GM13977 (cell line): ENCODE measurements at regions of chr2 and their contacts with region 1.

Region 1: DNA sequence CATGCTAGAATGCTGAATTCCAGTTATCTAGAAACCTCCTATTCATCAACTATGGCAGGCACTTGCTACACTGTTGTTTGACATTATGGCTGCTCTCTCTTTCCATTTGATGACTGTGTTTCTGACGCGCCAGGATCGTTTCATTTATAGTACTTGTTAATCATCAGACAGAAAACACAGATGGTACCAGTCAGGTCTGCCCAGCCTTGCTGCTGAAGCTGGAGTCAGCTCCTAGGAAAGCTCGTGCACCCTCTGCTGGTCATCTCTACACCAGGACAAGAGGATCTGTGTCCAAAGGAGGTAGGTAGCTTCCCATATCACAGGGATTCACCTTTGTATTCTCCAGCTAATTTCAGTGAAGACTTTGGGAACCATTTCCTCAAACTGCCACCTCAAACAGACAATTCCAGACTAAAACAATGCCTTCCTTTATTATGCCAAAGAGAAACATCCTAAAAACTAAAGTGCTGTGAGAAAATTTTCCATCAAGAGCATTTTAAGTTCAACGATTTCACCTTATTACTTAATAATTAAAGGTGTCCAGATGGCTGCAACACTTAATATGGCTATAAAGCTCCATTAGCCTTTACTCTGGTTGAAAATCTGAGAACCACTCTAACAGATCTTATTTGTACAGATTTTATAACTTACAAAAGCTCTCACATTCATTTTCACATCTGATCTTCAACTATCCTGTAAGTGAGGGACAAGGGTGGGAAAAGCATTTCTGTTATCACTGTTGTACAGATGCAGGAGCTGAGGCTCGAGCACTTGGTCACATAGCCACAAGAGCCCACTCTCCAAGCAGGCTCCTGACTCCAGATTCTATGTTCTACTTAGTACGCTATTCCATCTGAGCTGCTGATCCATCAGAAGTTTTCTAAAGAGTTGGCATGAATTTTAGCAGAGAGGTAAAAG is 17.5 kb downstream of the METTL8 start:
- DNase-seq: peak; percentile 64
- CTCF ChIP-seq: peak; percentile 79

Region 2: DNA sequence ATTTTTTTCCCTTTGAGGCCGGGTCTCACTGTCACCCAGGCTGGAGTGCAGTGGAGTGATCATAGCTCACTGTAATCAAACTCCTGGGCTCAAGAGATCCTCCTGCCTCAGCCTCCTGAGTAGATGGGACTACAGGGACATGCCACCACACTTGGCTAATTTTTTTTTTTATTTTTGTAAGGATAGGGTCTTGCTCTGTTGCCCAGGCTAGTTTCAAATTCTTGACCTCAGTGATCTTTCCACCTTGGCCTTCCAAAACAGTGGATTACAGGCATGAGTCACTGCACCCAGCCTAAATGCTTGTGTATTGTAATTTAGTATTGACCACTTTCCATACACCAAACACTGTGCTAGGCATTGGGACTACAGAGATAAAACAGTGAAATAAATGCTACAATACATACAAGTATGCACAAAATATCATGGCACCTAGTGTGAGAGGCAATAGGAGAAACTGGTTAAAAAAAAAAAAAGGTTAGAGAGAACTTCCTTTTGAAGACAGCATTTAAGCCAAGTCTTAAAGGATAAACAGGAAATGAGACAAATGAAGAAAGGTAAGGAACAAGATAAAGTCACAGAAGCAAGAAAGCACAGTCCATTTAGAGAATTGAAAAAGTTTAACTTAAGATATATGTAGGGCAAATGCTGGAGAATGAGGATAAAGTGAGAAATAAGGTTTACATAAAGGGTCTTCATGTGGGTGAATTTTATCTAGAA is 373.9 kb before region 1 on chr2:
- in situ Hi-C with region 1: no loop called
- DNase-seq: no peak
- CTCF ChIP-seq: no peak

Region 3: DNA sequence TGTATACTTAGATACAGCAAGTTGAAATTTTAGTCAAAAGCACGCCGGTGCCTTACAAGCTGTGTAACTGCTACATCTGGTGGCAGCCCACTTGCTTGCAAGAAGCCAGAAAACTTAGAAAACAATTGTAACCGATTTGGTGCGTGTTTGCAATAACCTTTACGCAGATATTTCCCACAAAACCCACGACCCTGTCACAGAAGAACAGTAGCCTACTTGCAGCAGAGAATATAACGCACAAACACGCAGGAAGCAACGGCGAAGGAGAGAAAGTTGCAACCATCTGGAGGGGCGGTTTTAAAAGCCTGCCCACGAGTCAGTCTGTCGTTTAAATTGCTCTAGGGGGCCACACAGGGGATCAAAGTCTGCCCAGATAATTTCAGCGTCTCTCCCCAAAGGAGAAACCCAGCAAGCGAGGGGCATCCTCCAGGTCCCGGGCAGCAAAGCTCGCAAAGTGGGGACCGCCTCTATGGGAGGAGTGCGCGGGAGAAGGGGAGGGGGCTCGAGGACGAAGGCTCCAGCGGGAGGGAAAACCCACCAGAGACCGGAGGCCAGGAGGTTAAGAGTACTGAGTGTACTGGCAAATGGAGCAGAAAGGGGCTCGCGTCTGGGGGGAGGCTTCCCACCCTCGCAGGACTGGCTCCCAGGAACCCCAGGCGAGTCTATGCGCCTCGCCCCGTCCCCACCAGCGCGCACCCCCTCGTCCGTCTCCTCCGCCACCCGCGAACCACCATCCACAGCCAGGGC is 256.7 kb before region 1 on chr2:
- in situ Hi-C with region 1: loop called (anchors 5 kb)
- DNase-seq: peak; percentile 57
- CTCF ChIP-seq: peak; percentile 58

Region 4: DNA sequence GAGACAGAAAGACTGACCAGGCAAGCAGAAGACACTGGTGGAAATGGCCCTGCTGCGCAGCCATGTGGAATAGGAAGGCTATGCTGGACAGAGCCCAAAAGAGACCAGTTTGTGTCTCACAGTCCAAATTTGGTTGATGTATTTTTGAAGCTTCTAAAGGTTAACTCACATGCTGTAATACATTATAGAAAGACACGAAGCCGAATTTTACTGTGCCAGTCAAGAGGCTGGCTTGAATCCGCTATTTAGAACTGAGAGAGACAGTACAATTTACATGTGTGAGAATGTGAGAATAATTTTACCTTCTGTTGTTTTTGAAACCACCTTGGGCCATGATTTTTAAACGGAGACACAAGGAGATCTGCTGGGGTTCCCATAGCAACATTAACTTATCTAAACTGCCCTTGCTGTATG is 96.1 kb before region 1 on chr2:
- in situ Hi-C with region 1: loop called (anchors 10 kb)
- DNase-seq: peak; percentile 30
- CTCF ChIP-seq: peak; percentile 44